ENCODE measurements at regions of chr12 and their contacts with region 1.

Region 1: DNA sequence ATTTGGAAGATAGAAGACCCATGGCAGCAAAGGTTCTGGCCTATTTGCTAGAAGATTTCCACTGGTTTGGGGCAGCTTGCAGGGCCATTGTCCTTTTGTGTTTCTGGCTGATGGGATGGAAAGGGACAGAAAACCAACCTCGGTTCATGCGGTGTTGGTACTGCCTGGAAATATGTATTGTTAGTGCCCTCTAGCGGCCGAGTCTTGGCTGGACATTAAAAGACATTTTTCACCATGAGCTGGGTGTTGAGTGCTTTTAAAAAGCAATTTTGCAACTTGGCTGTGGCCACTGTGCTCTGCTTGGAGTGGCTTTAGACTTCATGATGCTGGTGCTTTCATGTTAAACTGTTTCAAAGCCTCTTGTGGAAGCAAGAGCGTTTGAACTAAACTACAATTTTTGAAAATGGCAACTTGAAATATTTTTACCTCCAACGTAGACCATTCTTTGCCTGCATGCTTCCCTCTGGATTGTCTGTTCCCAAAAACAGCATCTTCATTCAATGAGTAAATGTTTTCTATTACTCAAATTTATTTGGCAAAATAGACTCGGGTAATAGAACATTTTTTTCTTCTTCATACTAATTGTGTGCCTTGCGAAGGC is 102.7 kb upstream of the TBX5 start:
- DNase-seq: peak; percentile 79
- ATAC-seq: peak; percentile 80
- H3K4me3 ChIP-seq: no peak overlapping the region
- H3K27ac ChIP-seq: no peak overlapping the region
- H3K4me1 ChIP-seq: peaks cover 5% of the 10 kb centered on the region
- H3K27me3 ChIP-seq: no peaks in the 10 kb centered on the region; the same call in 1 of the 2 replicates
- CTCF ChIP-seq: peak; percentile 87
- POLR2A ChIP-seq: no peak
- RAD21 ChIP-seq: peak; percentile 89

Region 2: GRCh38 chr12:113965951-113966797 is 542.5 kb before region 1 on chr12 and contains the start of gene RBM19:
- CTCF ChIA-PET with region 1: interaction called, 3 read pairs
- POLR2A ChIA-PET with region 1: no interaction called
- dilution Hi-C with region 1: no loop called
- in situ Hi-C with region 1: no loop called
- intact Hi-C with region 1: loop called (anchors 1 kb)
- DNase-seq: peak; percentile 97
- ATAC-seq: peak; percentile 100
- H3K4me3 ChIP-seq: peak within 1 kb of the TSS; percentile 60
- H3K27ac ChIP-seq: peak within 1 kb of the TSS; percentile 63
- H3K4me1 ChIP-seq: no peaks in the 10 kb centered on the region
- H3K27me3 ChIP-seq: peaks cover 5% of the 10 kb centered on the region; the same call in 1 of the 2 replicates
- CTCF ChIP-seq: peak; percentile 95
- POLR2A ChIP-seq: peak; percentile 80; the same call in 1 of the 2 replicates
- RAD21 ChIP-seq: peak; percentile 62
- total RNA-seq, gene RBM19: 18.3 and 19.2 TPM in 2 replicates

Measured in IMR-90 (cell line).